Mammary epithelial cell (primary cell): ENCODE measurements at regions of chr19 and their contacts with region 1.

Region 1: GRCh38 chr19:9309139-9309973 is at the start of gene ZNF699:
- DNase-seq: peak; percentile 96
- H3K4me3 ChIP-seq: peak within 1 kb of the TSS; percentile 77 to 82 (median 80)
- H3K27ac ChIP-seq: peak within 1 kb of the TSS; percentile 86
- H3K4me1 ChIP-seq: peaks cover 4% of the 10 kb centered on the region
- H3K27me3 ChIP-seq: no peaks in the 10 kb centered on the region
- CTCF ChIP-seq: no peak
- total RNA-seq, gene ZNF699: 11.6 to 69.2 TPM

Region 2: GRCh38 chr19:9205501-9206113 is 103.7 kb before region 1 on chr19:
- CTCF ChIA-PET with region 1: no interaction called
- dilution Hi-C with region 1: no loop called
- in situ Hi-C with region 1: no loop called
- intact Hi-C with region 1: loop called (anchors 5 kb)
- DNase-seq: peak; percentile 53
- H3K4me3 ChIP-seq: peak overlapping the region; percentile 21 to 33 (median 27)
- H3K27ac ChIP-seq: no peak overlapping the region
- H3K4me1 ChIP-seq: no peaks in the 10 kb centered on the region
- H3K27me3 ChIP-seq: no peaks in the 10 kb centered on the region
- CTCF ChIP-seq: peak; percentile 71 to 89

Region 3: DNA sequence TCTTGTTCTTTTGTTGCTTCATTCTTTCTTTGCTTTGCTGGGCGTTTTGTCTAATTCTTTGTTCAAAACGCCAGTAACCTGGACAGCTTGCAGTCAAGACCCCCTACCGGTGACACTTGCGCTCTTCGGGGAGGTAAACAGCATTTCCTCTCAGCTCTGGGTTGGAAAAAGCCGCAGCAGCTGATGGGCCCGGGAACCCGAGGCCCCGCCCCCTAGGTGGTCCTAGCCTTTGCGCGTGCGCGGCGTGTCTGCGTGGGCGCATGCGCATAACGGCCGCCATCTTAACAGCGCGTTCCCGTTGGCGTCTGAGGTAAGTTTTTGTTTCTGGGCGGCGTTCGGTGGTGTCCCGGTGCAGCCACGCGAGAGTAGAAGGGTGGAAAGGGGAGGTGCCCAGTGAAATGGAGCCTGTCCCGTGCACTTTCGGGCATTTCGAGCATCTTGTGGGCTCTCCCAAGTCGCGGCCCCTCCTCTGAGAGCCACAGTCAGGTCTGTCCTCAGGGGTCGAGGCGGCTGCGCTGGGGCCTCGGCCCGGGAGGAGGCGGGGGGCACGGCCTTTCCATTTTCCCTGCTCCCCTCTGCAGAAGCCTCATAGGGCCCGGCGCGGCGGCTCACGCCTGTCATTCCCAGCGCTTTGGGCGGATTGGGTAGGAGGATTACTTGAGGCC is 14.7 kb after region 1 on chr19 and contains the start of gene ZNF559:
- CTCF ChIA-PET with region 1: no interaction called
- dilution Hi-C with region 1: no loop called
- in situ Hi-C with region 1: no loop called
- intact Hi-C with region 1: loop called (anchors 2 kb)
- DNase-seq: peak; percentile 94
- H3K4me3 ChIP-seq: peak within 1 kb of the TSS; percentile 67 to 82 (median 72)
- H3K27ac ChIP-seq: peak within 1 kb of the TSS; percentile 38
- H3K4me1 ChIP-seq: no peaks in the 10 kb centered on the region
- H3K27me3 ChIP-seq: no peaks in the 10 kb centered on the region
- CTCF ChIP-seq: peak in 1 of 2 donors; percentile 33
- total RNA-seq, gene ZNF559: 7.6 to 12.8 TPM

Region 4: DNA sequence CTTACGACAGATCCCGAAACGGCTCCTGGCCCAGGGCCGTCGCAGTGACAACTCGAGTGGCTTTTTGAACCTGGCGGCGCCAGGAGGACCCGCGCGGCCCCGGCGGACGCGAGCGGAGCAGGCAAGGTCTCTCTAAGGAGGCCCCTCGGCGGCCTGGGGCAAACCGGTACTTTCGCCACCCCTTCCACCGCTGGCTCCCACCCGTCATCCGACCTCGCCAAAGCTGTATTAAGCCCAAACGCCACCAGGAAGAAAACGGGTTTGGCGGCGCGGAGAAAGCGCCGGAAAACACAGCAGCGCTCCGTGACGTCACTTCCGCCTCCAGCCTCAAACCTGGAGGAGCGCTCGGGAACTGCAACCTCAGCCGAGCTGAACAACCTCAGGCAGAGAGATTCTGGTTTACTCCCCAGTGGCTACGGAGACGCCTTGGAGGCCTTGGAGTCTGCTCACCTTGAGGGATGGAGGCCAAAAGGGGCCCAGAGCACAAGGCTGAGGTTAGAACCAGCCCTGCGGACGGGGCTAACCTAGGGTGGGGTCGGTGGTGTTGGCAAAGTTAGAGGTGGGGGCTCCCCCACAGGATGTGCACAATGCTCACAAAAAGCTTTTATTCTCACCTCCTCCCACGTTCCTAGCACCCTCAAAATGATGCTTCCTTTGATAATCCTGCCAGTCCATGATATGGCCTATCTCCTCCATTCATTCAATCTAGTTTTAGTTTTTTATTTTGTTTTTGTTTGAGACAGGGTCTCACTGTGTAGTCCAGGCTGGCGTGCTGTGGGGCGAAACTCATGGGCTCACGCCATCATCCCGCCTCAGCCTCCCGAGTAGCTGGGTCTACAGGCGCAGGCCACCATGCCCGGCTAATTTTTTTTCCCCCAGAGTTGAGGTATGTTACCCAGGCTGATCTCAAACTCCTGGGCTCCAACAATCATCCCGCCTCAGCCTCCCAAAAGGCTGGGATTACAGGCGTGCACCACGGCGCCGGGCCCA is 126.2 kb after region 1 on chr19 and contains the start of gene ZNF266:
- CTCF ChIA-PET with region 1: no interaction called
- dilution Hi-C with region 1: no loop called
- in situ Hi-C with region 1: no loop called
- intact Hi-C with region 1: loop called (anchors 5 kb)
- DNase-seq: peak; percentile 87
- H3K4me3 ChIP-seq: peak within 1 kb of the TSS; percentile 70 to 95 (median 84)
- H3K27ac ChIP-seq: peak within 1 kb of the TSS; percentile 78
- H3K4me1 ChIP-seq: no peaks in the 10 kb centered on the region
- H3K27me3 ChIP-seq: no peaks in the 10 kb centered on the region
- CTCF ChIP-seq: peak; percentile 53 to 74
- total RNA-seq, gene ZNF266: 10.5 to 14.2 TPM

Region 5: DNA sequence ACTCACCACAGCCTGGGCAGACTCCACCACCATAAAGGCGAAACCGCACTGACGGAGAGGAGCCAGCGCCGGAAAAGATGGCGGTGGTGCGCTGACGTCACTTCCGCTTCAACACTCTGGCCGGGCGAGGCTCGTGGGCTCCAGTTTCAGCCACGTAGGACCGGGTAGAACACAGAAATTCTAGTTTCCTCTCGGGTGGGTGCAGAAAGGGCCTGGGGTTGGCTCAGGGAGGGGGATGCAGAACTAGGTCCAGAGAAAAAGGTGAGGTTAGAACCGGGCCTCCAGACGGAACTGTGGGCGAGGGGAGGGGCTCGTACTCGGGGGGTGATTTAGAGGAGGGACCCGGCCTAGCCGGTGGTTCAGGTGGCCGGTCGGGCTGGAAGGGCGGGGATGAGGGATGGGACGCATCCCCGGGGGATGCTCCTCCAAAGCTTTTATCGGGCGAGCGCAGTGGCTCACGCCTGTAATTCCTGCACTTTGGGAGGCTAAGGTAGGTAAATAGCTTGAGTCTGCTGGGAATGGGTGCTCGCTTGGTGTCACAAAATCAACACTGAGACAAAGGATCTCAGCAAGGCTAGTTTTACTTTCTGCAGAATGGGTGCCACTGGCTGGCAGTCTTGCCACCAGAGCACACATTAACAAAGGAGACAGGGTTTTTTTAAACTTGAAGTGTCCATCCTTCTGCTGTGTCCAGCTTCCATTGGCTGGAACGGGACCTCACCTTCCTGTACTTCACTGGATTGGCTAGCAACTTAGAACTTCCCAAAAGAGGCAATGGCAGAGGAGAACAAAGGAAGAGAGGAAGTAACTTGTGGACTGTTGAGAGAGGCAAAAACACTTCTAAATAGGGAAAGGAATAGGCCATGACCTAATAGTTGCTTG is 312.0 kb after region 1 on chr19 and contains the start of gene ZNF561:
- CTCF ChIA-PET with region 1: no interaction called
- dilution Hi-C with region 1: no loop called
- in situ Hi-C with region 1: no loop called
- intact Hi-C with region 1: loop called (anchors 2 kb)
- DNase-seq: peak; percentile 90
- H3K4me3 ChIP-seq: peak within 1 kb of the TSS; percentile 81 to 93 (median 86)
- H3K27ac ChIP-seq: peak within 1 kb of the TSS; percentile 77
- H3K4me1 ChIP-seq: peaks cover 21% of the 10 kb centered on the region
- H3K27me3 ChIP-seq: no peaks in the 10 kb centered on the region
- CTCF ChIP-seq: no peak
- total RNA-seq, gene ZNF561: 62.6 to 78.3 TPM

Region 6: DNA sequence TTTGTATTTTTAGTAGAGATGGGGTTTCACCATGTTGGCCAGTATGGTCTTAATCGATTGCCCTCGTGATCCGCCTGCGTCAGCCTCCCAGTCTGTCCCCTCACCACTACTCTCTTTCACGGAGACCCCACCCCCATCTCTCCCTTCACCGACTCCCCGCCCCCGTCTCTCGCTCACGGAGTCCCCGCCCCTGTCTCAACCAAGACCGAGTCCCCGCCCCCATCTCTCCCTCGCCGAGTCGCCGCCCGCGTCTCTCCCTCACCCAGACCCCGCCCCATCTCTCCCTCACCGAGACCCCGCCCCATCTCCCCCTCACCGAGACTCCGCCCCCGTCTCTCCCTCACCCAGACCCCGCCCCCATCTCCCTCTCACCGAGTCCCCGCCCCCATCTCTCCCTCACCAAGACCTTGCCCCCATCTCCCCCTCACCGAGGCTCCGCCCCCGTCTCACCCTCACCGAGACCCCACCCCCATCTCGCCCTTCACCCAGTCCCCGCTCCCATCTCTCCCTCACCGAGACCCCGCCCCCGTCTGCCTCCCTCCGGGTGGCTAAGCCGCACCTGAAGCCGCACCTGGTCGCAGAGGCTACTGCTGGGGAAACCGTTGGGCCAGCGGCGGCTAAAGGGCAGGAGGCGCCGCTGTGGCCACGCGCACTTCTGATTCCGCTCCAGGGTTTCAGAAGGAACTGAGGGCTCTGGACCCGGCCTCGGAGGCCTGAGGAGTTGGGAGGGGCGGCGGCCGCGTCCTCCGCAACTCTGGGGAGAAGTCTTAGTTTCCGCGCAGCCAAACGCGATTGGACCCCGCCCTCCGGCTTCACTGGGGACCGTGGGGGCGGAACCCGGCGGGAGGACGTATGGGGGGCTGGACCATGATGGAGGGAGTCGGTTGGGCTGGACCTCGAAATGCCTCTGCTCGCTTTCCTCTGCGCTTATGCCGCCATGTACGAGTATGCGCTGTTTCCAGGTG is 476.3 kb after region 1 on chr19:
- CTCF ChIA-PET with region 1: no interaction called
- dilution Hi-C with region 1: no loop called
- in situ Hi-C with region 1: loop called in 1 of 2 experiments (anchors 10 kb)
- intact Hi-C with region 1: loop called (anchors 1 kb)
- DNase-seq: peak; percentile 93
- H3K4me3 ChIP-seq: peak overlapping the region; percentile 66 to 74 (median 71)
- H3K27ac ChIP-seq: peak overlapping the region; percentile 73
- H3K4me1 ChIP-seq: no peaks in the 10 kb centered on the region
- H3K27me3 ChIP-seq: no peaks in the 10 kb centered on the region
- CTCF ChIP-seq: no peak